ENCODE measurements at regions of chr11 and their contacts with region 1.

Region 1: GRCh38 chr11:1309498-1310317 is at the start of gene TOLLIP:
- DNase-seq: peak; percentile 93 to 98
- H3K4me3 ChIP-seq: peak within 1 kb of the TSS; percentile 90 to 92
- H3K27ac ChIP-seq: peak within 1 kb of the TSS; percentile 87 to 97
- H3K4me1 ChIP-seq: peaks cover 0 to 39% (median 34%) of the 10 kb centered on the region in 4 donors
- H3K27me3 ChIP-seq: no peaks in the 10 kb centered on the region
- CTCF ChIP-seq: peak; percentile 29 to 30

Region 2: GRCh38 chr11:1181867-1182535 is 127.7 kb before region 1 on chr11:
- intact Hi-C with region 1: no loop called
- DNase-seq: no peak
- H3K4me3 ChIP-seq: no peak overlapping the region
- H3K27ac ChIP-seq: no peak overlapping the region
- H3K4me1 ChIP-seq: no peaks in the 10 kb centered on the region
- H3K27me3 ChIP-seq: peaks cover 0 to 39% of the 10 kb centered on the region in 2 donors
- CTCF ChIP-seq: no peak

Region 3: GRCh38 chr11:1335811-1336761 is 26.4 kb after region 1 on chr11:
- intact Hi-C with region 1: loop called (anchors 2 kb)
- DNase-seq: peak; percentile 91 to 93
- H3K4me3 ChIP-seq: peak overlapping the region; percentile 64 to 76
- H3K27ac ChIP-seq: peak overlapping the region; percentile 94 to 95
- H3K4me1 ChIP-seq: peaks cover 0 to 20% (median 12%) of the 10 kb centered on the region in 4 donors
- H3K27me3 ChIP-seq: no peaks in the 10 kb centered on the region
- CTCF ChIP-seq: no peak

Region 4: DNA sequence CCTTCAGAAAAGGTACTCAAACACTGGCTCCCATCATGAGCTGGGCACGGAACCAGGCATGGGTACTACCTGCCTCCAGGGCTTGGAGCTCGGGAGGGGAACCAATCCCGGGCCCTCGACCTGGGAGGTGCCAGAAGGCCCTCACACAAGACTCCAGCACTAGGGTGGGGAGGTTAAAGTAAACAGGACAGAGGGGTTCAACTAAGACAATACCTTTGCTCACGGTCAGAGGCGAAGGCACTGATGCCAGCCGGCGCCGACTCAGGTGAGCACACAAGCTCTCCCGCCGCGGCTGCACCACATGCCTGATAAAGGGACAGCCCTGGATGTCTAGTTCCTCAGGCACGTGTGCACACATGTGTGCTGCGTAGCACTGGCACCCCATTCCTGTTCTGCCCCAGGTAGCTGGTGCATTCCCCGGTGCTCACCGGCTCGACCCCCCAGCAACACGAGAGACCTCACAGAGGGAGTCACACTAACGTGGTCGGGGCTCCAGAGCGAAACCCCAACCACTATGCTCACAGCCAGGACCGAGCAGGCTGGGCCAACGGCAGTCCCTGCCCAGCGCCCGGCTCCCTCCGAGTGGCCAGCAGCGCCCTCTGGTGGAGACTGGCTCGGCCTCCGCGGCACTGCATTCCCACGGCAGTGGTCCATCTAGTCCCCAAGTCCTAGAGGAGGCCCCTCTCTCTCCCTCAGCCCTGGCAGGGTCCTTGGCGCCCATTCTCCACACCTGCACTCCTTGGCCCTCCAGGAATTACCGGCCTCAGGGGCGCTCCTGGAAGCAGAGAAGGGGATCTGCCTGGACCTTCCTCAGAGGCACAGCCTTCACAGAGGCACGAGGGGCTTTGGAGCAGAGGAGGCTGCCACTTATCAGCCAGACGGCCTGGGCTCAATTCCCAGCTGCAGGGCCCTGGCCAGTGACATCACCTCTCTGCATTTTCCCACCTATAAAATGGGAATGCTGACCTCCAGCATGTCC is 205.7 kb after region 1 on chr11:
- intact Hi-C with region 1: loop called (anchors 10 kb)
- DNase-seq: peak; percentile 72 to 87
- H3K4me3 ChIP-seq: peak overlapping the region; percentile 16 to 28
- H3K27ac ChIP-seq: peak overlapping the region; percentile 48 to 52
- H3K4me1 ChIP-seq: peaks cover 0 to 63% (median 45%) of the 10 kb centered on the region in 4 donors
- H3K27me3 ChIP-seq: no peaks in the 10 kb centered on the region
- CTCF ChIP-seq: peak; percentile 92 to 97

Measured in tibial artery (tissue), 4 donors.